Right cardiac atrium (tissue), 5 donors: ENCODE measurements at regions of chr19 and their contacts with region 1.

Region 1: DNA sequence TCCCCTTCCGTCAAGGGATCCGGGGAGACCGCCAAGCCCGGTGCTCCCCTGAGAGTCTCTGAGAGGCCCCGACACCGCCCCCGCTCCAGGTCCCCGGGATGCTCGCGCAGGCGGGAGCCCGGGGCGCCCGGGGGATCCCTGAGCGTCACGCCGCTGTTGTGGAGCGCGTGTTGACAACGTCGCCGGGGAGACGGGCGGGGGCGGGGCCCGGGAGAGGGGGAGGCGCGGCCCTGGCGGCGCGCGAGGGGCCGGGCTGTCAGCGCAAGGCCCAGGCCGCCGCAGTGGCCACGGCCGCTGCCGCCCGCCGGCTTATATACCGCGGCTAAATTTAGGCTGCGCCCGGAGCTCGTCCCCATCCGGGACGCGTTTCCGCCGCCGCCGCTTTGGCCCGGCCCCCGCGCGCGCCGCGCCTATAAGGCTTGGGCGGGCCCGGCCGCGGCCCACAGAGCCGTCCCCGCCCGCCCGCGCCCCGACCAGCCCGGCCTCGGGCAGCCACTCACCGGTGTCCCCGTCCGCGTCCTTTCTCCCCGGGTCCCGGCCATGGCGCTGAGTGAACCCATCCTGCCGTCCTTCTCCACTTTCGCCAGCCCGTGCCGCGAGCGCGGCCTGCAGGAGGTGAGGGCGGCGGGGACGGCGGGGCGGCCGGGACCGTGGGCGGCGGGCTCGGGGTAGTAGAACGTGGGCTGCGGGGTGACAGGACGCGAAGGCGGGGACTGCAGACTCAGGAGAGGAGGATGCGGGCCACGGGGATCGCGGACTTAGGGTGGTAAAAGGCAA is at the start of gene KLF2:
- DNase-seq: peak; percentile 95 to 99 (median 98)
- ATAC-seq: peak; percentile 83 to 91
- H3K4me3 ChIP-seq: peak within 1 kb of the TSS; percentile 68
- H3K27ac ChIP-seq: peak within 1 kb of the TSS; percentile 83
- H3K4me1 ChIP-seq: peaks cover 2% of the 10 kb centered on the region
- H3K27me3 ChIP-seq: no peaks in the 10 kb centered on the region
- total RNA-seq, gene KLF2: 53.3 to 73.5 (median 68.1) TPM

Region 2: GRCh38 chr19:16247353-16248182 is 77.0 kb before region 1 on chr19:
- intact Hi-C with region 1: loop called (anchors 5 to 10 kb)
- DNase-seq: peak; percentile 87 to 95 (median 95)
- ATAC-seq: peak; percentile 92 to 95
- H3K4me3 ChIP-seq: no peak overlapping the region
- H3K27ac ChIP-seq: no peak overlapping the region
- H3K4me1 ChIP-seq: no peaks in the 10 kb centered on the region
- H3K27me3 ChIP-seq: no peaks in the 10 kb centered on the region

Region 3: GRCh38 chr19:16259385-16260159 is 65.0 kb before region 1 on chr19:
- intact Hi-C with region 1: loop called in 1 of 4 experiments (anchors 10 kb)
- DNase-seq: peak in 2 of 3 donors; percentile 70 to 74
- ATAC-seq: no peak
- H3K4me3 ChIP-seq: no peak overlapping the region
- H3K27ac ChIP-seq: peak overlapping the region; percentile 99
- H3K4me1 ChIP-seq: peaks cover 15% of the 10 kb centered on the region
- H3K27me3 ChIP-seq: no peaks in the 10 kb centered on the region

Region 4: DNA sequence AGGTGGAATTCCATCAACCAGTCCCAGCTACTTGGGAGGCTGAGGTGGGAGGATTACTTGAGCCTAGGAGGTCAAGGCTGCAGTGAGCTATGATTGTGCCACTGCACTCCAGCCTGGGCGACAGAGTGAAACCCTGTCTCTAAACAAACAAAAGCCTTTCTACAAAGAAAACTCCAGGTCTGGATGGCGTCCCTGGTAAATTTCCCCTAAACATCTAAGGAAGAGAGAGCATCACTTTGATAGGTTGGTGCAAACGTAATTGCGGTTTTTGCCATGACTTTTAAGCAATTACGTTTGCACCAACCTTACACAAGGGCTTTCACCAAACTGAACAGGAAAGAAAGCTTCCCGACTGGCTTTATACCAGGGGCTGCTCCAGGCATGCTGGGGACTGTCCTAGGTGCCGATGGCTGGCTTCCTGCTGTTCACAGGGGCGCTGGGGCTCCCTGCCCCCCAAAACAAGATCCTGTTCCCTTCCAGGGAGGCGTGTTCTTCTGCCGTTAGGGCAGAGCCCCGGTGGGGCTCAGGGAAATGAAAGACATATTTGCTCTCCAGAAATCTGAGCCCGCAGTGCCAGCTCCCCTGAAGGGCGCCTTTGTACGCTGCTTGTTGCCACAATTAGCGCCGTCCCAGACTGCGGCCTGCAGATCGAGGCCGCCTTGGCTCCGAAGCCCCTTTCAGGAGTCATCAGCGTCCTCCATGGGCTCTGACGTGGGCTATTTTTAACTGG is 38.6 kb before region 1 on chr19:
- intact Hi-C with region 1: loop called in 2 of 4 experiments (anchors 5 kb)
- DNase-seq: peak; percentile 50 to 79 (median 78)
- ATAC-seq: peak in 1 of 2 donors; percentile 1
- H3K4me3 ChIP-seq: no peak overlapping the region
- H3K27ac ChIP-seq: peak overlapping the region; percentile 89
- H3K4me1 ChIP-seq: peaks cover 5% of the 10 kb centered on the region
- H3K27me3 ChIP-seq: no peaks in the 10 kb centered on the region

Region 5: DNA sequence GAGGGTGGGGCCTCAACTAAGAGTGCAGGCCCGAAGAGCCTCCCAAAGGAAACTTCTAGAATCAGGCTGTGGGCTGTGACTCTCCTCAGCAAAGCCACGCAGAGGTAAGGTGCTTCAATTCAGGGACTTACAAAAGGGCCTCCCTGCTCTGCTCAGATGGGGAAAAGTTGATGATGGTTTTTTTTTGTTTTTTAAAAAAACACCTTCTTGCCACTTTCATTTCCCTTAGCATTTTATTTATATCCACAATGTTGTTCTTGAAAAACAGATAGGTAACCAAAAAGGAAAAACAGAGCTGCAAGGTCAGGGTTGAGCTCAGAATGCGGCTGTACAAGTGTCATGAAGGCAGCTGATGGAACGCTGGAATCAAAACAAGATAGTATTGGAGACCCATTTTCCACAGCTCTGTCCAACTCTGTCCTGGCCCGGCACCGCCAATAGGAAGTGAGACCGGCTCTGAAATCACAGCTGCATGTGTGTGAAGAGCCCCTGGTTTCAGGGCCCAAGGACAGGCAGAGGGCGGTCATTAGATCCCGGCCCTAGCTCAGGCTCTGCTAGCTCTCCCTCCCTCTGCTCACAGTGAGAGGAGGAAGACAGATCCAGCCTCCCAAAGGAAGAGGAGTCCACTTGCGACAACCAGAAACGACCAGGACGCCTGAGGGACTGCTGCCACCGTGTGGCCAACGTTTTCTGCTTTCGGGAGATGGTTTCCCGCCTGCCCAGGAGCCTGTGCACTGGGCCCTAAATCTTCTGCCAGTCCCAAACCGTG is 58.4 kb after region 1 on chr19:
- intact Hi-C with region 1: loop called in 2 of 4 experiments (anchors 5 kb)
- DNase-seq: peak; percentile 88 to 97 (median 95)
- ATAC-seq: peak; percentile 88
- H3K4me3 ChIP-seq: no peak overlapping the region
- H3K27ac ChIP-seq: peak overlapping the region; percentile 97
- H3K4me1 ChIP-seq: peaks cover 13% of the 10 kb centered on the region
- H3K27me3 ChIP-seq: no peaks in the 10 kb centered on the region